ENCODE measurements at regions of chr17 and their contacts with region 1.

Region 1: GRCh38 chr17:45385331-45385997 is 47.2 kb downstream of the ARHGAP27 start:
- DNase-seq: peak; percentile 91
- ATAC-seq: peak; percentile 95 to 97

Region 2: GRCh38 chr17:45218895-45219661 is 166.4 kb before region 1 on chr17:
- intact Hi-C with region 1: loop called (anchors 2 to 5 kb)
- DNase-seq: peak; percentile 87
- ATAC-seq: peak; percentile 72 to 75

Region 3: GRCh38 chr17:45247429-45248131 is 137.9 kb before region 1 on chr17:
- intact Hi-C with region 1: loop called in 1 of 2 experiments (anchors 10 kb)
- DNase-seq: peak; percentile 91
- ATAC-seq: peak; percentile 90

Region 4: DNA sequence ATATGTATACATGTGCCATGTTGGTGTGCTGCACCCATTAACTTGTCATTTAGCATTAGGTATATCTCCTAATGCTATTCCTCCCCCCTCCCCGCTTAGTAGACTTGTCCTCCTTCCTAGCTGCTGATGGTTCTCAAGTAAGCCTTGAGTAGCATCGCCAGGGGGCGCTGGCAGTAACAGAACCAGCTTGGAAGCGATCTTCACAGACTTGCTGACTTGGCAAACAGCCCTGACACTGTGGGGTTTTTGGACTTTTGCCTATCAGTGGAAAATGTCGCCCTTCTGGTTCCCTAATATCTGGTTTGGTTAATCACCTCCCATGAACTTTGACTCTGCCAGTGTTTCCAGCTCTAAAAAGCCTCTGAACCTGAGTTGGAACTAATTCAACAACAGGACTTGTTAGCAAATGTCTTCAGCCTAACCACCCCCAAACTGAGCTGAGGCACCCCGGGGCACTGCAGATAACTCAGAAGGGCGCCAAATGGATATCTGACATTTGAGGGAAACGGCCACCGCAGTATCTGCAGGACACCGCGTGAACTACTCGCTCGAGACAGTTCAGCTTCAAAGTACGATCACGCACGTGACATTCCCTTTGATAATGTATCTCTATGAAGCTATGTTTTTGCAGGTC is 108.1 kb before region 1 on chr17:
- intact Hi-C with region 1: loop called (anchors 2 to 5 kb)
- DNase-seq: peak; percentile 96
- ATAC-seq: peak; percentile 75 to 85

Region 5: GRCh38 chr17:45317112-45317928 is 68.1 kb before region 1 on chr17:
- intact Hi-C with region 1: loop called in 1 of 2 experiments (anchors 10 kb)
- DNase-seq: peak; percentile 100
- ATAC-seq: peak; percentile 92 to 93

Measured in left cardiac atrium (tissue), 4 donors.